ENCODE measurements at regions of chr11 and their contacts with region 1.

Region 1: DNA sequence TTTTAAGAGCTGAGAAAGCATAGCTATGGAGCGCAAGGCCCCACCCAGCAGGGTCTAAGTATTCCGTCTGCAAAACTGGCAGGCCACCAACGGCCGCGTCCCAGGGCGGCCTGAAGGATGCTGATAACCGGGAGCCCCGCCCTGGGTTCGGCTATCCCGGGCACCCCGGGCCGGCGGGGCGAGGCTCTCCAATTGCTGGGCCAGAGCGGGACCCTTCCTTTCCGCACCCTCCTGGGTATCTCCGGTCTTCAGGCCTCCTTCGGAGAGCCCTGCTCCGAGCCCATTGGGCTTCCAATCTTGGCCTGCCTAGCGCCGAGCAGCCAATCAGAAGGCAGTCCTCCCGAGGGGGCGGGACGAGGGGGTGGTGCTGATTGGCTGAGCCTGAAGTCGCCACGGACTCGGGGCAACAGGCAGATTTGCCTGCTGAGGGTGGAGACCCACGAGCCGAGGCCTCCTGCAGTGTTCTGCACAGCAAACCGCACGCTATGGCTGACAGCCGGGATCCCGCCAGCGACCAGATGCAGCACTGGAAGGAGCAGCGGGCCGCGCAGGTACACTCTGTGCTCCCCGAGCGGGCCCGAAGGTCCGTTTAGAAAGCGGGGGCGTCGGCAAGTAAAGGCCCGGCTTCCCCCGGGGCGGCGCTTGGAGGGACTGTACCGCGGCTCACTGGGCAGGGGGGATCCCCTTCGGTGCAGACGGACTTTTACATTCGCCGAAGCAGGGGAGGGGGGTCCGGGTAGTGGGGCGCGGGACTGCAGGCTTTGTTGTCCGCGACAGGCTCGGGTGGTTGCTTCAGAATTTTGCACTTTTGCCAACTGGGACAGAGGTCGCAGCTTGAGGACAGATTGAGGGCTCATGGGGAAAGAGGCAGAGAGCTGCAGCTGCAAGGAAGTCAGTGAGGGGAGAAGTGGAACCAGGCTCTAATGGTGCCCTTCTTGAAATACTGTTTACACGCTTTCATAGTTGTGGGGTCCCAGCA is at the start of gene CAT:
- DNase-seq: peak; percentile 98
- H3K4me3 ChIP-seq: peak within 1 kb of the TSS; percentile 82
- H3K4me3 Mint-ChIP-seq: peak within 1 kb of the TSS; percentile 95
- H3K27ac Mint-ChIP-seq: peak within 1 kb of the TSS; percentile 94
- H3K4me1 ChIP-seq: peaks cover 11% of the 10 kb centered on the region
- H3K4me1 Mint-ChIP-seq: peaks cover 10% of the 10 kb centered on the region
- H3K27me3 ChIP-seq: no peaks in the 10 kb centered on the region
- H3K27me3 Mint-ChIP-seq: no peaks in the 10 kb centered on the region
- CTCF ChIP-seq: no peak
- total RNA-seq, gene CAT: 45.6 and 46.1 TPM in 2 replicates

Region 2: GRCh38 chr11:34105079-34105956 is 333.5 kb before region 1 on chr11 and contains the start of gene NAT10:
- CTCF ChIA-PET with region 1: no interaction called
- POLR2A ChIA-PET with region 1: no interaction called
- intact Hi-C with region 1: loop called (anchors 5 kb)
- DNase-seq: peak; percentile 97 to 99
- H3K4me3 ChIP-seq: peak within 1 kb of the TSS; percentile 74
- H3K4me3 Mint-ChIP-seq: peak within 1 kb of the TSS; percentile 94
- H3K27ac Mint-ChIP-seq: peak within 1 kb of the TSS; percentile 95
- H3K4me1 ChIP-seq: peaks cover 9% of the 10 kb centered on the region
- H3K4me1 Mint-ChIP-seq: peaks cover 19% of the 10 kb centered on the region
- H3K27me3 ChIP-seq: no peaks in the 10 kb centered on the region
- H3K27me3 Mint-ChIP-seq: no peaks in the 10 kb centered on the region
- CTCF ChIP-seq: no peak
- total RNA-seq, gene NAT10: 91.4 and 101 TPM in 2 replicates

Region 3: DNA sequence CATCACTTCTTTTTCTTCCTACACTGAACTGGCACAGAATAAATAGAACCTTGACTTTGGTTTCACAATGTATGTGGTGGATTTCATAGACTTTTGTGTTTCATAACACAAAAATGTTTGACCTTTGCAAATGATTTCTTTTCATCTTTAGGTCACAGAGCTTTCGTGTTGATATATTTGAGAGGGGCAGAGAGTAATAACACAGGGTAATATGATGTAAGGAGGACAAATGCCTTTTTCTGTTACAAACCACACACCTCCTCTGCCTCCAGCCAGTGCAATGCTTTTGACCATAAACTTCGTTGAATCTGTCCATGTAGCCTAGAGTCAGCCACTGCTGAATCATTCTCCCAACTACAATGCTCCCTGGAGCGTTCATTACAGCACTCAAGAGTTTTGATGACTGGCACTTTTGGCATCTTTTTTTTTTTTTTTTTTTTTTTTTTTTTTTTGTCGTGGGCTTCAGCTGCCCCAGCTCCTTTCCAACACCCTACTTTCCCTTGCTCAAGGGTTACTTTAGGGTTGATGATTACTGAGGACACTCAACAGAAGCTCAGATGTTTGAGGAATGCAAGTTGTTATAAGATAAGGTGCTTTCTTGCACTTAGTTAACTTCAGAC is 11.5 kb before region 1 on chr11:
- CTCF ChIA-PET with region 1: interaction called, 3 read pairs
- POLR2A ChIA-PET with region 1: interaction called, 12 read pairs
- intact Hi-C with region 1: loop called (anchors 1 kb)
- DNase-seq: peak; percentile 49 to 52
- H3K4me3 ChIP-seq: no peak overlapping the region
- H3K4me3 Mint-ChIP-seq: peak overlapping the region; percentile 17
- H3K27ac Mint-ChIP-seq: peak overlapping the region; percentile 24
- H3K4me1 ChIP-seq: peaks cover 12% of the 10 kb centered on the region
- H3K4me1 Mint-ChIP-seq: peaks cover 14% of the 10 kb centered on the region
- H3K27me3 ChIP-seq: no peaks in the 10 kb centered on the region
- H3K27me3 Mint-ChIP-seq: peaks cover 2% of the 10 kb centered on the region
- CTCF ChIP-seq: no peak

Region 4: GRCh38 chr11:34449013-34449412 is 10.2 kb after region 1 on chr11:
- CTCF ChIA-PET with region 1: no interaction called
- POLR2A ChIA-PET with region 1: no interaction called
- intact Hi-C with region 1: loop called (anchors 1 kb)
- DNase-seq: no peak
- H3K4me3 ChIP-seq: no peak overlapping the region
- H3K4me3 Mint-ChIP-seq: no peak overlapping the region
- H3K27ac Mint-ChIP-seq: no peak overlapping the region
- H3K4me1 ChIP-seq: no peaks in the 10 kb centered on the region
- H3K4me1 Mint-ChIP-seq: no peaks in the 10 kb centered on the region
- H3K27me3 ChIP-seq: no peaks in the 10 kb centered on the region
- H3K27me3 Mint-ChIP-seq: no peaks in the 10 kb centered on the region
- CTCF ChIP-seq: no peak

Measured in Caco-2 (cell line).